Right ventricle myocardium superior (tissue), 1 donor: ENCODE measurements at regions of chr9 and their contacts with region 1.

Region 1: GRCh38 chr9:104863180-104863883 is 64.6 kb downstream of the ABCA1 start:
- DNase-seq: peak; percentile 48
- ATAC-seq: peak; percentile 68

Region 2: DNA sequence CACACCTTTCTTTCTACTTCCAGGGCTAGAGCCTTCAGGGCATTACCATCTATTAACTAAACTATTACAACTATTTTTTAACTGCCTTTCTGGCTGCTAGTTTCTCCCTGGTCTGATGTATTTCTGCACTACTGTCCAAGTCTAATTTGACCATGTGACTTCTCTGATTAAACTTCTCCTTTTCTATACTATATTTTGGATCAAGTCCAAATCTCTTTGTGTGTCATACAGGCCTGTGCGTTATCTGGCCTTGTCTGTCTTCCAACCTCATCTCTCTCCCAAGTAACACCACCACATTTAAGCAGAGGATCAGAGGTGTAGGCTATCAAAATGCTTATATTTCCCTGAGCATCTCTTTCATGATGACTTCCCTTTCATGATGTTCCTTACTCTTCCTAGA is 406.5 kb before region 1 on chr9:
- intact Hi-C with region 1: no loop called
- DNase-seq: no peak
- ATAC-seq: no peak

Region 3: DNA sequence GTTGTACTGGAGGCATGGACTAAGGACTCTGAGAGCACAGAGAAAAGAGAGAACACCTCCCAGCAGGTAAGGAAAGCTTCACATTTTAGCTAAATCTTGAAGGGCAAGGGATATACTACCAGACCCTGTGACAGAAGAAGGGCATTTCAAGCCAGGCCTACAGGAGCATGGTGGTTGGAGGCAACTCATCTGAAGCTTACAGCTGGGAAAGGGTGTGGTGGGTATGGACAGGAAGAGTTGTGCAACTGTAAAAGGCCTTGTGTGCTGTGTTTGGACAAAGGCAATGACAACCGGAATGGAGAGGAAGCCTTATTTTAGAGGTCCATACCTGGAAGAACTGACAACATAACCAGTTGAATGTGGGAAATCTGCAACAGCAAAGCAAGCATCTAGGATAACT is 68.2 kb before region 1 on chr9:
- intact Hi-C with region 1: no loop called
- DNase-seq: no peak
- ATAC-seq: peak; percentile 57

Region 4: GRCh38 chr9:104808035-104808614 is 55.2 kb before region 1 on chr9:
- intact Hi-C with region 1: no loop called
- DNase-seq: no peak
- ATAC-seq: peak; percentile 49

Region 5: GRCh38 chr9:104836235-104836634 is 27.1 kb before region 1 on chr9:
- intact Hi-C with region 1: no loop called
- DNase-seq: no peak
- ATAC-seq: peak; percentile 71

Region 6: GRCh38 chr9:104911032-104911607 is 47.8 kb after region 1 on chr9:
- intact Hi-C with region 1: loop called (anchors 10 kb)
- DNase-seq: no peak
- ATAC-seq: no peak

Region 7: DNA sequence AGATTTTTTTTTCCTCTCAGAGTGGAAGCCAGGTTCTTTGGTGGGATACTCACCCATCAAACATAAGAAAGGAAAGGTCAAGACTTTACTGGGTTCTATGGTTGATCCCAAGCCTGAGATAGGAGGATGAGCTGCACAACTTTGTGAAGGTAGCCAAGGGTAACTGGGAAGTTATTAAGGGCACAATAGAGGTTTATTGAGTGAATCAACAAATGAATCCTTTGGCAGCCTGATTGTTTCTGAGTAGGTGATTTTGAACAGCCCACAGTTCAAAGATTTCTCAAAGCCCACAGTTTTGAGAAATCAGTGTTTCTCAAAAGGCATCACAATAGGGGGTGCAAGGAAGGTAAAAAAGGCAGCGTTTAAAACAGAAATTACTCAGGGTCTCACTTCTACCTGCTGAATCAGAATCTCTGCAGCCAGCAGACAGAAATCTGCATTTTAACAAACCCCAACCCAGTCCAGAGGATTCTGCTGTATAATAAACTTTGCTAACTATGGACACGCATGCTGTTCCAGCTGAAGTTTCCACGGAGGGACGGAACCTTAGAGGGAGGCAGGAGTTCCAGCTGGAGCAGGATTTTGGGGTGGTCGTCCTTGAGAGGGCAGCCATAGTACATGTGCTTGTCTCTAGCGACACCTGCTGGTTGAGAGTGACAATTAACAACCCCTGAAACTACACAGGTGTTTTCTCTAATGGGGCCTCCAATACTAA is 551.8 kb after region 1 on chr9:
- intact Hi-C with region 1: loop called (anchors 5 kb)
- DNase-seq: no peak
- ATAC-seq: peak; percentile 87